ENCODE measurements at regions of chr11 and their contacts with region 1.

Region 1: DNA sequence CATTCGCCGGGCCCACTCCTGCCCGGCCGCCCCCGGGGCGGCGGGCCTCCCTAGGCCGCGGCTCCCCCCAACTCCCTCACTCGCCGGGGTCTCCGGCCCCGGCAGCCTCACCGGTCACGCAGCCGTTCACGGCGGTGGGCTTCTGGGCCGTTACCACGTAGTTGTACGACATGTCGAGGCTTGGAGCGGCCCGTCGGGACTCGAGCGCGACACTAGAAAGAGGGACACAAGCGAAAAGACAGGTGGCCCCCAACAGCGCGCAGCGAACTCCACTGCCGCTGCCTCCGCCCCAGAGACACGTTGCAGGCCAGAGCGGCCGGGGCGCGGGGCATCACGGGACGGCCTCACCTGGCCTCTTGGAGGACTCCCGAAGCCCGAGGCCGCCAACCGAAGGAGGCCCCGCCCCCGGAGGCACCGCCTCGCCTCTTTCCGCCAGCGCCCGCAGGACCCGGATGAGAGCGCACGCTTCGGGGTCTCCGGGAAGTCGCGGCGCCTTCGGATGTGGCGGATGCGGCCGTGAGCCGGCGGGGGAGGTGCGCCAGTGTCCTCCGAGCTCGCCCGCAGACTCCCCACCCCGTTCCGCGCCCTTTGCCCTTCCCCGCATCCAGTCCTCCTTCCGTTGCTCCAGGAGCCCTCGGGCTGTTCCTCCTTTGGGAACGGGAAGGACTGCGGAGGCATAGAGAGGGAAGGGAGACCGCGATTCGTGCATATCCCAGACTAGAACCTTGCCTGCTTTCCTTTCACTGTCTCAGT is at the starts of genes DDB1 and TKFC:
- DNase-seq: peak; percentile 100
- H3K4me3 Mint-ChIP-seq: peak within 1 kb of the TSS; percentile 97
- H3K27ac Mint-ChIP-seq: peak within 1 kb of the TSS; percentile 98
- H3K4me1 Mint-ChIP-seq: peaks cover 56% of the 10 kb centered on the region
- H3K27me3 Mint-ChIP-seq: no peaks in the 10 kb centered on the region
- total RNA-seq, gene DDB1: 265 and 268 TPM in 2 replicates
- total RNA-seq, gene TKFC: 81.7 and 84.7 TPM in 2 replicates

Region 2: GRCh38 chr11:60906132-60906972 is 426.6 kb before region 1 on chr11 and contains the start of gene PRPF19:
- intact Hi-C with region 1: loop called (anchors 1 kb)
- DNase-seq: peak; percentile 100
- H3K4me3 Mint-ChIP-seq: peak within 1 kb of the TSS; percentile 91
- H3K27ac Mint-ChIP-seq: peak within 1 kb of the TSS; percentile 92
- H3K4me1 Mint-ChIP-seq: peaks cover 29% of the 10 kb centered on the region
- H3K27me3 Mint-ChIP-seq: peaks cover 5% of the 10 kb centered on the region
- total RNA-seq, gene PRPF19: 219 TPM in 2 replicates

Region 3: DNA sequence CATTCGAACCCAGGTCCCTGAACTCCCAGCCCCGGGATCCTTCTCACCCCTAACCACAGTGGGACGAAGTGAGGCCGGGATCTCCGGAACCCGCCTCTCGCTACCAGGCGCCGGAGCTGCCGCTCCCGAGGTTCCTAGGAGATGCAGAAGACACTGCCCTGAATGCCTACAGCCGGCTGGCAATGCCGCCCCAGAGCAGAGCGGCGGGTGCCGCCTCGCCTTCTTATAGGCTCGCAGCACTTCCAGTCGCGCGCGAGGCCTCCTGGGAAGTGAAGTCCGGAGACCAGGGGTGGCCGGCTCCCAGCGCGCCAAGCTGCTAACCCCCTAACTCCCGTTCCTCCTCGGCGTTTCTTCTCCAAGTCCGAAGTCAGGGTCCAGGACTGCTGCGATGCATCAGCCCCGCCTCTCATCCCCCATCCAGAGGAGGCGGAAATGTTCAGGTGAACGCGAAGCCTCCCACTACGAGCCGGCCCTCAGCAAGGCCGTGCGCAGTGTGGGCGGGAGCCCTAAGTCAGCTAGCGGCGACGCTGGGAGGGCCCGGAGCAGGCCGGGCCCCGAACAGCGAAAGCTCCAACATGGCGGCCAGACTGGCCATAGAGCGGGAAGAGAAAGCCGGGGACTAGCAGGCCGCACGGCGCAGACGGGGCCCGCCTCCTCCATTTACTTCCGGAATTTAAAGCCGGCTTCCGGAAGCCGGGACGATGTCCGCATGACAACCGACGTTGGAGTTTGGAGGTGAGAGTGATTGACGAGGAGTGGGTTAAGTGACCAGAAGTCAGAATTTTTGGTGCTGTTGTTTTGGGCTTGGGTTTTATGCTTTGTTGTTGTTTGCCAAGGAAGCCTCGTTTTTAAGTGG is 28.9 kb after region 1 on chr11 and contains the starts of genes CYB561A3 and TMEM138:
- intact Hi-C with region 1: loop called (anchors 1 kb)
- DNase-seq: peak; percentile 97
- H3K4me3 Mint-ChIP-seq: peak within 1 kb of the TSS; percentile 96
- H3K27ac Mint-ChIP-seq: peak within 1 kb of the TSS; percentile 95
- H3K4me1 Mint-ChIP-seq: peaks cover 26% of the 10 kb centered on the region
- H3K27me3 Mint-ChIP-seq: no peaks in the 10 kb centered on the region
- total RNA-seq, gene CYB561A3: 34.9 and 35.1 TPM in 2 replicates
- total RNA-seq, gene TMEM138: 65.2 and 69.9 TPM in 2 replicates

Region 4: GRCh38 chr11:61392981-61393595 is 60.1 kb after region 1 on chr11:
- intact Hi-C with region 1: loop called (anchors 1 kb)
- DNase-seq: peak; percentile 68
- H3K4me3 Mint-ChIP-seq: peak overlapping the region; percentile 91
- H3K27ac Mint-ChIP-seq: peak overlapping the region; percentile 92
- H3K4me1 Mint-ChIP-seq: peaks cover 18% of the 10 kb centered on the region
- H3K27me3 Mint-ChIP-seq: no peaks in the 10 kb centered on the region